CD4-positive, alpha-beta memory T cell (primary cell): ENCODE measurements at regions of chr14 and their contacts with region 1.

Region 1: GRCh38 chr14:97978341-97978740 is 1181.2 kb downstream of the VRK1 start:
- DNase-seq: peak; percentile 64 to 85 (median 67)
- H3K4me3 ChIP-seq: peak overlapping the region in 1 of 2 donors; percentile 64
- H3K4me3 Mint-ChIP-seq: peak overlapping the region; percentile 86 to 95 (median 92)
- H3K27ac ChIP-seq: peak overlapping the region; percentile 73
- H3K27ac Mint-ChIP-seq: peak overlapping the region; percentile 95 to 97 (median 96)
- H3K4me1 ChIP-seq: peaks cover 47% of the 10 kb centered on the region
- H3K4me1 Mint-ChIP-seq: peaks cover 39 to 67% (median 50%) of the 10 kb centered on the region in 4 donors
- H3K27me3 ChIP-seq: no peaks in the 10 kb centered on the region
- H3K27me3 Mint-ChIP-seq: peaks cover 0 to 2% of the 10 kb centered on the region in 2 donors

Region 2: DNA sequence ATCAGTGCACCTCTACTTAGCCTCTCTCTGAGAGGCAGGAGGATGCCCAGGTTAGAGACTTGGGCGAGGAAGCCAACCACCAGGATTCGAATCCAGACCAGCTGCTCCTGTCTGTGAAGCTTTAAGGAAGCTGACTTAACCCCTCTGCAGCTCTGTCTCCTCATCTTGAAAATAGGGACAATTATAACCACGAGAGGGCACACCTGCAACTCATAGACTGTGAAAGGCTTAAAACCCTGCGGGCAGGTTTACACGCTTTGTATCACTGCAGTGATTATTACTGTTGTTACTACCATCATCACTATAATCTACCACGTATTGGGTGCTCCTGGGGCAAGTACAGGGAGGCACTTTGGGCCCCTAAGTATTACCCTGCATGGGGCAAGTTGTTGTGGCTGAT is 801.3 kb before region 1 on chr14:
- CTCF ChIA-PET with region 1: interaction called, 3 read pairs
- POLR2A ChIA-PET with region 1: interaction called, 3 read pairs
- intact Hi-C with region 1: loop called (anchors 5 kb)
- DNase-seq: peak; percentile 46 to 53 (median 50)
- H3K4me3 ChIP-seq: no peak overlapping the region
- H3K4me3 Mint-ChIP-seq: peak overlapping the region in 1 of 8 donors; percentile 23
- H3K27ac ChIP-seq: no peak overlapping the region
- H3K27ac Mint-ChIP-seq: peak overlapping the region in 3 of 7 donors; percentile 4 to 71 (median 34)
- H3K4me1 ChIP-seq: peaks cover 3% of the 10 kb centered on the region
- H3K4me1 Mint-ChIP-seq: peaks cover 19 to 43% (median 23%) of the 10 kb centered on the region in 4 donors
- H3K27me3 ChIP-seq: no peaks in the 10 kb centered on the region
- H3K27me3 Mint-ChIP-seq: peaks cover 0 to 1% of the 10 kb centered on the region in 2 donors

Region 3: DNA sequence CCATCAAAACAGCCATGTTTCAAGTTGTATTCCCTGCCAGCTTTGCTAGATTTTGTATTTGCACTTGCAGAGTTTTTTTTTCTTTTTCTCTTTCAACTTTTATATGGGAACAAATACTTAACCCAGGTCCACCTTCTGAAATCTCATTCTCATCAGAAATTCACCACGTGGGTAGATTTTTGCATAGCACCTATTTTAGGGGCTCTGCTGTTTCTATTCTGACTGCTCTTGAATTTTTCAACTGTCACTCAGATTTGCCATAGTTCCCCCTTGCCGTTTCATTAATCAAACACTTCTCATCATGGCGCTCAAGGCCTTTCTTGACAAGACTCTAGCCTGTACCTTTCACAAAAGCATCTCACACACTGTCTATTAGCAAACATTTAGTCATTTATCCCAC is 414.0 kb before region 1 on chr14:
- CTCF ChIA-PET with region 1: no interaction called
- POLR2A ChIA-PET with region 1: no interaction called
- intact Hi-C with region 1: no loop called
- DNase-seq: no peak
- H3K4me3 ChIP-seq: no peak overlapping the region
- H3K4me3 Mint-ChIP-seq: no peak overlapping the region
- H3K27ac ChIP-seq: no peak overlapping the region
- H3K27ac Mint-ChIP-seq: no peak overlapping the region
- H3K4me1 ChIP-seq: no peaks in the 10 kb centered on the region
- H3K4me1 Mint-ChIP-seq: peaks cover 0 to 1% (median 0%) of the 10 kb centered on the region in 4 donors
- H3K27me3 ChIP-seq: no peaks in the 10 kb centered on the region
- H3K27me3 Mint-ChIP-seq: peaks cover 2 to 3% of the 10 kb centered on the region in 2 donors

Region 4: DNA sequence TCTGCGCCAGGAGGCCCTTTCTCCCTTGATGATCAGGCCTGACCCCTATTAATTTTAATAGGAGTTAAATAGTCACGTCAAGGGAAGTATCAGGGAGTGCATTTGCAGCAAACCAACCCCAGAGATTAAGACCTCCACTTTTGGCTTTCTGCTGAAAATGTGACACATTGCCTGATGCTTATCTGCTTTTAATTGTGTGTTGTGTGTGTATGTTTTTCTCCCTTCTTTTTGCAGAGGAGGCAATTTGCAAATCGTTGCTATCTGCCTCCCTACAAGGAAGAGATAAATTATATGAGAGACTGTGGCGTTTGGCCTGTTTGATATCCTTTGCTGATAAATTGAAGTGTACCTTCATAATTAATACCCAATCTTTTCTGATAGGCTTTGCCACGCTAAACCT is 358.3 kb before region 1 on chr14:
- CTCF ChIA-PET with region 1: no interaction called
- POLR2A ChIA-PET with region 1: interaction called, 9 read pairs
- intact Hi-C with region 1: loop called (anchors 5 kb)
- DNase-seq: peak in 1 of 5 donors; percentile 33
- H3K4me3 ChIP-seq: peak overlapping the region in 1 of 2 donors; percentile 26
- H3K4me3 Mint-ChIP-seq: peak overlapping the region; percentile 60 to 94 (median 85)
- H3K27ac ChIP-seq: peak overlapping the region; percentile 73
- H3K27ac Mint-ChIP-seq: peak overlapping the region; percentile 89 to 99 (median 97)
- H3K4me1 ChIP-seq: peaks cover 45% of the 10 kb centered on the region
- H3K4me1 Mint-ChIP-seq: peaks cover 44 to 67% (median 47%) of the 10 kb centered on the region in 4 donors
- H3K27me3 ChIP-seq: no peaks in the 10 kb centered on the region
- H3K27me3 Mint-ChIP-seq: no peaks in the 10 kb centered on the region

Region 5: GRCh38 chr14:98018628-98019027 is 40.3 kb after region 1 on chr14:
- CTCF ChIA-PET with region 1: interaction called, 3 read pairs
- POLR2A ChIA-PET with region 1: interaction called, 9 read pairs
- intact Hi-C with region 1: loop called (anchors 1 kb)
- DNase-seq: peak in 4 of 5 donors; percentile 55 to 65 (median 56)
- H3K4me3 ChIP-seq: no peak overlapping the region
- H3K4me3 Mint-ChIP-seq: peak overlapping the region in 4 of 8 donors; percentile 4 to 63 (median 13)
- H3K27ac ChIP-seq: no peak overlapping the region
- H3K27ac Mint-ChIP-seq: peak overlapping the region in 4 of 7 donors; percentile 1 to 63 (median 43)
- H3K4me1 ChIP-seq: peaks cover 62% of the 10 kb centered on the region
- H3K4me1 Mint-ChIP-seq: peaks cover 47 to 67% (median 53%) of the 10 kb centered on the region in 4 donors
- H3K27me3 ChIP-seq: no peaks in the 10 kb centered on the region
- H3K27me3 Mint-ChIP-seq: no peaks in the 10 kb centered on the region

Region 6: DNA sequence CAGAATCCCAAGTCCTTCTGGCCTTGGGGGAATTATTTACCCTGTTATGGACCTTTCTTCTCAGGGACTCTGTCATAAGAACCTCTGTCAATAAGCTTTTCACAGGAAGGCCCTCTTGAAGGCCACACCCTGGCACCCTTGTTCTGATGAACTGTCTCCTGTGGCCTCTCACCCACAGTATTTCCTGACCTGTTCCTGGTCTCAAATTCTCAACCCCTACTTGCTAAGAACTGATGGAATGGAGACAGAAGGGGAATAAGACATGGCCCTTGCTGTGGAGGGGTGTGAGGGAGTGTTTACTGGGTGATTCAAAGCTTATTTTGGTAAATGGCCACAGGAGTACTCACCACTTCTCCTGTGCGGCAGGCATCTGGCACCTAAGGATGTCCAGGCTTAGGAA is 210.7 kb after region 1 on chr14:
- CTCF ChIA-PET with region 1: interaction called, 5 read pairs
- POLR2A ChIA-PET with region 1: interaction called, 40 read pairs
- intact Hi-C with region 1: loop called (anchors 2 kb)
- DNase-seq: peak in 1 of 5 donors; percentile 39
- H3K4me3 ChIP-seq: peak overlapping the region; percentile 38 to 42
- H3K4me3 Mint-ChIP-seq: peak overlapping the region; percentile 67 to 85 (median 80)
- H3K27ac ChIP-seq: peak overlapping the region; percentile 65
- H3K27ac Mint-ChIP-seq: peak overlapping the region; percentile 84 to 98 (median 94)
- H3K4me1 ChIP-seq: peaks cover 100% of the 10 kb centered on the region
- H3K4me1 Mint-ChIP-seq: peaks cover 84 to 100% (median 94%) of the 10 kb centered on the region in 4 donors
- H3K27me3 ChIP-seq: no peaks in the 10 kb centered on the region
- H3K27me3 Mint-ChIP-seq: no peaks in the 10 kb centered on the region

Region 7: GRCh38 chr14:99192028-99192621 is 1213.8 kb after region 1 on chr14:
- CTCF ChIA-PET with region 1: interaction called, 10 read pairs
- POLR2A ChIA-PET with region 1: interaction called, 16 read pairs
- intact Hi-C with region 1: loop called (anchors 5 kb)
- DNase-seq: peak in 3 of 5 donors; percentile 58 to 75 (median 62)
- H3K4me3 ChIP-seq: peak overlapping the region; percentile 48 to 75
- H3K4me3 Mint-ChIP-seq: peak overlapping the region; percentile 81 to 94 (median 88)
- H3K27ac ChIP-seq: peak overlapping the region; percentile 81
- H3K27ac Mint-ChIP-seq: peak overlapping the region; percentile 92 to 99 (median 98)
- H3K4me1 ChIP-seq: peaks cover 94% of the 10 kb centered on the region
- H3K4me1 Mint-ChIP-seq: peaks cover 80 to 97% (median 90%) of the 10 kb centered on the region in 4 donors
- H3K27me3 ChIP-seq: no peaks in the 10 kb centered on the region
- H3K27me3 Mint-ChIP-seq: no peaks in the 10 kb centered on the region